ENCODE measurements at regions of chr1 and their contacts with region 1.

Region 1: GRCh38 chr1:89022167-89022959 is at the start of gene GBP3:
- DNase-seq: peak; percentile 75
- ATAC-seq: peak; percentile 77
- H3K4me3 ChIP-seq: peak within 1 kb of the TSS; percentile 81
- H3K27ac ChIP-seq: peak within 1 kb of the TSS; percentile 98
- H3K4me1 ChIP-seq: peaks cover 7% of the 10 kb centered on the region
- H3K27me3 ChIP-seq: no peaks in the 10 kb centered on the region
- CTCF ChIP-seq: no peak
- POLR2A ChIP-seq: no peak
- RAD21 ChIP-seq: no peak
- total RNA-seq, gene GBP3: 42.5 and 50.0 TPM in 2 replicates

Region 2: DNA sequence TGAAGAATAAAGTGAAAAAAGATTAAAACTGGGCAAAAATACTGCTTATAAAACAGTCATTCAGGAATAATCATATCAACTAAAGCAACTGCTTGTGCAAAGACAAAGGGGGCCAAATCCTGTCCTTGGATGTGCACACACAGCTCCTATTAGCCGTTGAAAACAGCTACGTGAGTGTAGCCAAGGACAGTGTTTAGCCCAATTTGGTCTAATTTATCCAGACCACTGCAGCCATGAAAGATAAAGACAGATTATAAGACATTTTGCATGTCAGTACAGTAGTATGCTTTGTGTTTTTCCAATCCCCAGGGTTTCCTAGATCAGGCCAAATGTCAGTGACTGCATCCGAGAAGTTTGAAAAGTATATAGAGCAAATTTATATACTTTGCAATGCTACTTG is 484.6 kb before region 1 on chr1:
- CTCF ChIA-PET with region 1: no interaction called
- POLR2A ChIA-PET with region 1: no interaction called
- dilution Hi-C with region 1: no loop called
- in situ Hi-C with region 1: no loop called
- intact Hi-C with region 1: no loop called
- DNase-seq: no peak
- ATAC-seq: no peak
- H3K4me3 ChIP-seq: no peak overlapping the region
- H3K27ac ChIP-seq: no peak overlapping the region
- H3K4me1 ChIP-seq: no peaks in the 10 kb centered on the region
- H3K27me3 ChIP-seq: no peaks in the 10 kb centered on the region
- CTCF ChIP-seq: no peak
- POLR2A ChIP-seq: no peak
- RAD21 ChIP-seq: no peak

Region 3: DNA sequence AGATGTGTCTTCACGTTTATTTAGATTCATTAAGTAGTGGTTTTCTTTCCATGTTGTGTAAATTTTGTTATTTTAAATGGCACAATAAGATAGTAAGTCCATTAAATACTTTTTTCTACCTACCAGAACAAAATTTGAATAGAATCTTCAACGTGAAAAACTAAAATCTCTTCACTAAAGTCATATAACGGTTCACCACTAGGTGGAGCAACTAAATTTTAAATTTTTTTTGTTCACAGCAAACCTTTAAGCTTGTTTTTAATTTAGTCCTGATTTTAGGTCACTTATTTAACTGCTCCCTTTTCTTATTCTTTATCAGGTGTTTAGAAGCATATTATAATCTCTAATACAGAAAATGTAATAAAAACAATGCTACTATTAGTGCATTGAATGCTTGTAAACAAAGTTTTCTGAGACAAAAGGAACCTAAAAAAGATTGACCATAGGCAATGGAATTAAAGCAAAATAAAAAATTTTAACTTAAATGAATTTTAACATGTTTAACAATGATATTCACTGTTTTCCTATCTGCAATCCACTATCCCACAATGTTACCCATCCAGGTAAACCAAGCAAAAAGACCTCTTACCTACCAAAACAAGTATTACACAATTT is 366.6 kb before region 1 on chr1:
- CTCF ChIA-PET with region 1: no interaction called
- POLR2A ChIA-PET with region 1: no interaction called
- dilution Hi-C with region 1: no loop called
- in situ Hi-C with region 1: no loop called
- intact Hi-C with region 1: no loop called
- DNase-seq: peak; percentile 37
- ATAC-seq: no peak; the same call in 1 of the 2 replicates
- H3K4me3 ChIP-seq: no peak overlapping the region
- H3K27ac ChIP-seq: no peak overlapping the region
- H3K4me1 ChIP-seq: no peaks in the 10 kb centered on the region
- H3K27me3 ChIP-seq: no peaks in the 10 kb centered on the region
- CTCF ChIP-seq: peak; percentile 62
- POLR2A ChIP-seq: no peak
- RAD21 ChIP-seq: peak; percentile 40

Region 4: GRCh38 chr1:88825721-88826120 is 196.6 kb before region 1 on chr1:
- CTCF ChIA-PET with region 1: no interaction called
- POLR2A ChIA-PET with region 1: no interaction called
- dilution Hi-C with region 1: no loop called
- in situ Hi-C with region 1: no loop called
- intact Hi-C with region 1: no loop called
- DNase-seq: no peak
- ATAC-seq: no peak
- H3K4me3 ChIP-seq: no peak overlapping the region
- H3K27ac ChIP-seq: no peak overlapping the region
- H3K4me1 ChIP-seq: peaks cover 3% of the 10 kb centered on the region; the same call in 1 of the 2 replicates
- H3K27me3 ChIP-seq: no peaks in the 10 kb centered on the region
- CTCF ChIP-seq: no peak
- POLR2A ChIP-seq: no peak
- RAD21 ChIP-seq: no peak

Region 5: DNA sequence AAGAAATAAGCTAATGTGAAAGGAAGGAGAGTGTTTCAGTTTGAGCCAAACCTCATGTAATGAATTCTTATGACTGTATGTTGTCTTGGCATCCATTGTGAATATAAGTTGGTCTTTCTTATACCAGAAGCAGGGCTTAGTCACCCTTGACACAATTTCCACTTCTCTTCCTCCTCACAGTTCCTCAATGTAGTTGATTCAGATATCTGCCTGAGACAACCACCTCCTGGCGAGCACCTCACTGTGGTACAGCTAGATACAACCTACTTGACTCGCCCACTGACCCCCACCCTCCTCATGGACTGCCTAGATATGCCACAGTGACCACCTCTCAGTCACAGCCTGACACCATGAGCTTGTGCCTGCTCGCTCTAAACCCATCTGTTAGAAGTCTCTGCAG is 75.5 kb before region 1 on chr1:
- CTCF ChIA-PET with region 1: no interaction called
- POLR2A ChIA-PET with region 1: no interaction called
- dilution Hi-C with region 1: no loop called
- in situ Hi-C with region 1: no loop called
- intact Hi-C with region 1: no loop called
- DNase-seq: peak; percentile 66
- ATAC-seq: peak; percentile 11; the same call in 1 of the 2 replicates
- H3K4me3 ChIP-seq: no peak overlapping the region
- H3K27ac ChIP-seq: no peak overlapping the region
- H3K4me1 ChIP-seq: peaks cover 6% of the 10 kb centered on the region
- H3K27me3 ChIP-seq: no peaks in the 10 kb centered on the region
- CTCF ChIP-seq: no peak
- POLR2A ChIP-seq: no peak
- RAD21 ChIP-seq: no peak

Region 6: DNA sequence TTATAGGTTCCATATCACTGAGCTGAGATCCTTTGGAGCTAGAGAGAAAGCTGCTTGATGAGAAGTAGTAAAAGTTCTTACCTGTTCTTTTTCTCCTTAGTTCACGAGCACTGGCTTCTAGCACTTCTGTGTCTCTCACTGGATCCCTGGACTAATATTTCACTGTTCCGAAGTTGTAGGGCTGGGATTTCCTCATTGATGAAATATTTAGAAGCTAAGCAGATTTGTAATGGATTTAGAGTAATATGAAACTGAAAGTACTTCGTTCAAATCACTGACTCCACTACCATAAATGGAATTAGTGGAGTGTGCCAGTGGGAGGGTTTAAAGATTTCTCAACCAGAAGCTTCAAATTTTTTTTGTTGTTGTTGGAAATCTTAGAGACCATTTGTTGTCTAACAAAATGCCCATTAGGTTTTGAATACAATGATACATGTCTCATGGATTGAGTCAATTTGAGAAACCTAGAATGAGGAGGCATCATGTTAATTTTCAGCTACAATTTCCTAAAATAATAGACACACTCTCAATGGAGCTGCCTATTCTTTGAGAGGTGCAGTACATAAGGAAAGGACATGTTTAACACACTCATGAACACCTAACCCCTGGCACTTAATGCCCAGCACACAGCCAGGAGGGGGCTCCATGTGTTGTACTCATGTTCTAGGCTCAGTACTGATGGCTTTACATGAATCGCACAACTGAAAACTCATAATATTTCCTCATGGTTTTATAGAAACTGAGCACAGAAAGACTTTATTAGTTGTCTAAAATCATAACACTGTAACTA is 42.9 kb after region 1 on chr1 and contains the start of gene GBP1:
- CTCF ChIA-PET with region 1: interaction called, 3 read pairs
- POLR2A ChIA-PET with region 1: interaction called, 6 read pairs
- dilution Hi-C with region 1: no loop called
- in situ Hi-C with region 1: no loop called
- intact Hi-C with region 1: loop called (anchors 1 kb)
- DNase-seq: peak; percentile 88
- ATAC-seq: peak; percentile 79
- H3K4me3 ChIP-seq: peak within 1 kb of the TSS; percentile 98
- H3K27ac ChIP-seq: peak within 1 kb of the TSS; percentile 100
- H3K4me1 ChIP-seq: peaks cover 5% of the 10 kb centered on the region
- H3K27me3 ChIP-seq: no peaks in the 10 kb centered on the region
- CTCF ChIP-seq: no peak
- POLR2A ChIP-seq: peak; percentile 40; the same call in 1 of the 2 replicates
- RAD21 ChIP-seq: no peak
- total RNA-seq, gene GBP1: 108 and 118 TPM in 2 replicates